ENCODE measurements at regions of chr9 and their contacts with region 1.

Region 1: GRCh38 chr9:120412425-120412951 is 167.5 kb downstream of the CDK5RAP2 start:
- DNase-seq: peak; percentile 11
- H3K4me3 Mint-ChIP-seq: no peak overlapping the region
- H3K27ac Mint-ChIP-seq: no peak overlapping the region
- H3K4me1 Mint-ChIP-seq: no peaks in the 10 kb centered on the region
- H3K27me3 Mint-ChIP-seq: no peaks in the 10 kb centered on the region
- CTCF ChIP-seq: no peak

Region 2: GRCh38 chr9:120336021-120336752 is 76.3 kb before region 1 on chr9:
- CTCF ChIA-PET with region 1: no interaction called
- POLR2A ChIA-PET with region 1: no interaction called
- intact Hi-C with region 1: loop called (anchors 10 kb)
- DNase-seq: peak; percentile 35
- H3K4me3 Mint-ChIP-seq: no peak overlapping the region
- H3K27ac Mint-ChIP-seq: no peak overlapping the region
- H3K4me1 Mint-ChIP-seq: peaks cover 7% of the 10 kb centered on the region
- H3K27me3 Mint-ChIP-seq: no peaks in the 10 kb centered on the region
- CTCF ChIP-seq: no peak

Measured in MCF 10A (cell line).